GM12878 (cell line): ENCODE measurements at regions of chr5 and their contacts with region 1.

Region 1: GRCh38 chr5:37412515-37413277 is 33.6 kb downstream of the WDR70 start:
- DNase-seq: no peak
- ATAC-seq: peak; percentile 92
- H3K4me3 ChIP-seq: no peak overlapping the region
- H3K27ac ChIP-seq: no peak overlapping the region
- H3K4me1 ChIP-seq: no peaks in the 10 kb centered on the region
- H3K27me3 ChIP-seq: no peaks in the 10 kb centered on the region
- CTCF ChIP-seq: peak; percentile 78 to 90 (median 84)
- EP300 ChIP-seq: no peak
- POLR2A ChIP-seq: no peak
- RAD21 ChIP-seq: peak; percentile 88

Region 2: GRCh38 chr5:37400501-37400900 is 12.2 kb before region 1 on chr5:
- CTCF ChIA-PET with region 1: interaction called, 15 read pairs
- POLR2A ChIA-PET with region 1: no interaction called
- RAD21 ChIA-PET with region 1: no interaction called
- SMC1A ChIA-PET with region 1: interaction called, 3 read pairs
- in situ Hi-C with region 1: no loop called
- intact Hi-C with region 1: no loop called
- DNase-seq: no peak
- ATAC-seq: no peak
- H3K4me3 ChIP-seq: no peak overlapping the region
- H3K27ac ChIP-seq: no peak overlapping the region
- H3K4me1 ChIP-seq: no peaks in the 10 kb centered on the region
- H3K27me3 ChIP-seq: no peaks in the 10 kb centered on the region
- CTCF ChIP-seq: no peak
- EP300 ChIP-seq: no peak
- POLR2A ChIP-seq: no peak
- RAD21 ChIP-seq: no peak

Region 3: DNA sequence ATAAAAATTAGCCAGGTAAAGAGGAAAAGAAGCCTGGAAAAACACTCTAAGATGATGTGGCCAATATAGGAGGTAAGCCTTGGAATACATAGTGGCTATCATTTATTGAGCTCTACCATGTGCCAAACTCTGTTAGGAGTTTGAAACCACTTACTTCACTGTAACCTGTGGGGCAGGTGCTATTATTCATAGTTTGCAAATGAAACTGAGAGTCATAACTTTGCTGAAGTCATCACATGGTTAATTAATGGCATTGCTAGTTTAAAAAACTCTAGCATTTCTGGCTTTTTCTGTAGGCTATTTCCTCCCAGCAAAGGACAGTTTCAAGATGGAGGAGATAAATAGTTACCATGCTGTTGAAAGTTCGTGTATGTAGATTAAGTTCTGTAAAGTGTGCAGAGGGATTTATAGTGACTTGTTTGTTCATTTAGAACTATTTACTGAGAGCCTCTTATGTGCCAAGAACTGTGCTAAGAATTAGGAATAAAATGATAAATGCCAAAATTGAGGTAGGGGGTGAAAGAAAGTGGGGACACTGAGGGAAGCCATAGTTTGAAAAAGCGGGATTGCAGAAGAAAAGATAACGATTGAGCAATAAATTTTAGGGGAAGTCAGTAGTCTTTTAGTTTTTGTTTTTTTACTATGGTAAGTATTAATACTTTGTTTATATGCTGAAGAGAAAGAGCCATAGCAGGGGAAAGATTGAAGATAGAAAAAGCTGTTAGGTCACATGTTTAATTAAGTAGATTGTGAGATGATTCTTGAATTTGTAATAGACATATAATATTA is 23.6 kb after region 1 on chr5:
- CTCF ChIA-PET with region 1: interaction called, 11 read pairs
- POLR2A ChIA-PET with region 1: no interaction called
- RAD21 ChIA-PET with region 1: no interaction called
- SMC1A ChIA-PET with region 1: interaction called, 7 read pairs
- in situ Hi-C with region 1: no loop called
- intact Hi-C with region 1: no loop called
- DNase-seq: no peak
- ATAC-seq: peak; percentile 96
- H3K4me3 ChIP-seq: no peak overlapping the region
- H3K27ac ChIP-seq: no peak overlapping the region
- H3K4me1 ChIP-seq: no peaks in the 10 kb centered on the region
- H3K27me3 ChIP-seq: no peaks in the 10 kb centered on the region
- CTCF ChIP-seq: no peak
- EP300 ChIP-seq: no peak
- POLR2A ChIP-seq: no peak
- RAD21 ChIP-seq: no peak

Region 4: DNA sequence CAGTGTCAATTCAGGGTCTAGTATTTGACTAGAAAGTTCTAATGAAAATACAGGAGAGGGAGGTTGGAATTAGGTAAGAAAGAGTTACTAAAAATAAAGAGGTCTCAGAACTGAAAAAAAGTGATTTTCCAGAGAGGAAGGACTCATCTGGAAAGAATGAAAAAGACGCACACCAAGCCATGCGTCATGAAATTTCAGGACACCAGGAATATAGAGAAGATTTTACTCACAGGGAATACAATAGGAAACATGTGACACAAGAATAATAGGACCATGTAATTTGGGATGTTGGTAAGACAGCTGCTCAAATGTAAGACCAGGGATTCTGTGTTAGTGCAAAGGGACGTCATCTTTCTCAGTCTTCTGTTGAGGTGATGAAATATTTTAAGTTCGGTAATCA is 202.5 kb after region 1 on chr5:
- CTCF ChIA-PET with region 1: no interaction called
- POLR2A ChIA-PET with region 1: no interaction called
- RAD21 ChIA-PET with region 1: no interaction called
- SMC1A ChIA-PET with region 1: no interaction called
- in situ Hi-C with region 1: no loop called
- intact Hi-C with region 1: loop called (anchors 10 kb)
- DNase-seq: no peak
- ATAC-seq: no peak
- H3K4me3 ChIP-seq: no peak overlapping the region
- H3K27ac ChIP-seq: no peak overlapping the region
- H3K4me1 ChIP-seq: no peaks in the 10 kb centered on the region
- H3K27me3 ChIP-seq: no peaks in the 10 kb centered on the region
- CTCF ChIP-seq: no peak
- EP300 ChIP-seq: no peak
- POLR2A ChIP-seq: no peak
- RAD21 ChIP-seq: no peak

Region 5: GRCh38 chr5:37837414-37838032 is 424.8 kb after region 1 on chr5:
- CTCF ChIA-PET with region 1: interaction called, 7 read pairs
- POLR2A ChIA-PET with region 1: no interaction called
- RAD21 ChIA-PET with region 1: interaction called, 7 read pairs
- SMC1A ChIA-PET with region 1: interaction called, 3 read pairs
- in situ Hi-C with region 1: no loop called
- intact Hi-C with region 1: loop called (anchors 5 kb)
- DNase-seq: no peak
- ATAC-seq: peak; percentile 93
- H3K4me3 ChIP-seq: peak overlapping the region; percentile 38; the same call in 1 of the 2 replicates
- H3K27ac ChIP-seq: no peak overlapping the region
- H3K4me1 ChIP-seq: peaks cover 3% of the 10 kb centered on the region; the same call in 1 of the 2 replicates
- H3K27me3 ChIP-seq: peaks cover 21 to 32% of the 10 kb centered on the region in 2 experiments
- CTCF ChIP-seq: peak; percentile 85 to 94 (median 92)
- EP300 ChIP-seq: no peak
- POLR2A ChIP-seq: no peak
- RAD21 ChIP-seq: peak; percentile 93